Activated CD8-positive, alpha-beta T cell treated with anti-CD3 and anti-CD28 coated beads, Interleukin-2, amount 10 ng/mL, durations not matched to agents 7 days and 5 days (primary cell): ENCODE measurements at regions of chr3 and their contacts with region 1.

Region 1: DNA sequence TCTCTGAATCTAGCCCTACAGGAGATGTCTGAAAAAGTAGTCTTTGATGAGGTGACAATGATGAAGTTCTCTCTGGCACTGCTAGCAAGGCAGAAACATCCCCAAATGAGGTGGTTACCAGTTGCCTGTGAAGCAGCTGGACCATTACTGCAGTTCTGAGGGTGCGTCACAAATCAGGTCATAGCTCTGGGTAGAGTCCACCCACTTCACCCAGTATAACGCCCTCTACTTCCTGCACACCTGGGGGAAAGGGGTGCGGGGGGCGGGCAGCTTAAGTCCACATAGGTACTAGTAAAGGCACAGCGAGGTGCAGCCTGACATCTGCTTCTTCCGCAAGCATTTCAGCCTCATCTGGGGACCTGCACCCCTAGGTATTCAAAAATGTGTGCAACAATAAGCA is 13.4 kb upstream of the SATB1 start:
- DNase-seq: peak; percentile 83
- ATAC-seq: peak; percentile 79
- H3K4me3 Mint-ChIP-seq: peak overlapping the region; percentile 69
- H3K27ac Mint-ChIP-seq: peak overlapping the region; percentile 80
- H3K4me1 Mint-ChIP-seq: peaks cover 44% of the 10 kb centered on the region
- H3K27me3 Mint-ChIP-seq: no peaks in the 10 kb centered on the region

Region 2: DNA sequence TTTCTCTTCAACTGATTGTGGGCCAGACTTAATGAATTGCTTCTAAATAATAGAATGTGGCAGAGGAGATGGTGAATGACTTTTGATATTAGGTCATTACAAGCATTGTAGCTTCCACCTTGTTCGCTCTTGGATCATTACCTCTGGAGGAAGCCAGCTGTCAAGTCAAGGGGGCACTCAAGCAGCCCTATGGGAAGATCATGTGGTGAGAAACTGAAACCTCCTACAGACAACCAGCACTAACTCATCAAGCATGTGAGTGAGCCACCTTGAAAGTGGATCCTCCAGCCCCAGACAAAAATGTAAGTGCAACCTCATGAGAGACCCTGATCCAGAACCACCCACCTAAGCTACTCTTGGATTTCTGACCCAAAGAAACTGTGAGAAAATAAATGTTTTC is 586.4 kb before region 1 on chr3:
- CTCF ChIA-PET with region 1: no interaction called
- POLR2A ChIA-PET with region 1: no interaction called
- DNase-seq: no peak
- ATAC-seq: no peak
- H3K4me3 Mint-ChIP-seq: no peak overlapping the region
- H3K27ac Mint-ChIP-seq: no peak overlapping the region
- H3K4me1 Mint-ChIP-seq: no peaks in the 10 kb centered on the region
- H3K27me3 Mint-ChIP-seq: peaks cover 27% of the 10 kb centered on the region

Region 3: DNA sequence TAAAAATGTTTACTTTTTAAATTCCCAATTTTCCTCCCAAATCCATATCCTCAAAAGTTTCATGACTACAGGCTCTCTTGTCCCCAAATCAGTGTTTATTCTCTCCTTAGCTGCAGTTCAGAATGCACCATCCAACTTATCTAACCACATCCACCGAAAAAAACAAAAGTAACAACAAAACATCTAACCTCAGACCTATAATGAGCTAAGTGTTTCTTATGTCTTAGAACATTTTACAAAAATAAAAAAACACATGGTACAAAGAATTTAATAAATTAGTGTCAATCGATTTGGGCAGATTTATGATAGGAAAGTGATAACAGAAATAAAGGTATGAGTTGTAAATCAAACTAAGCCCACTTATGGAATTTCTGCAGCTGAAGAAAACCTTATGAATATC is 27.0 kb before region 1 on chr3:
- CTCF ChIA-PET with region 1: interaction called, 42 read pairs
- POLR2A ChIA-PET with region 1: interaction called, 265 read pairs
- DNase-seq: no peak
- ATAC-seq: peak; percentile 44
- H3K4me3 Mint-ChIP-seq: peak overlapping the region; percentile 63
- H3K27ac Mint-ChIP-seq: peak overlapping the region; percentile 71
- H3K4me1 Mint-ChIP-seq: peaks cover 87% of the 10 kb centered on the region
- H3K27me3 Mint-ChIP-seq: no peaks in the 10 kb centered on the region

Region 4: GRCh38 chr3:18424729-18425640 is 13.6 kb before region 1 on chr3 and contains the start of gene SATB1:
- CTCF ChIA-PET with region 1: interaction called, 42 read pairs
- POLR2A ChIA-PET with region 1: interaction called, 265 read pairs
- DNase-seq: peak; percentile 79
- ATAC-seq: peak; percentile 23
- H3K4me3 Mint-ChIP-seq: peak within 1 kb of the TSS; percentile 87
- H3K27ac Mint-ChIP-seq: peak within 1 kb of the TSS; percentile 88
- H3K4me1 Mint-ChIP-seq: peaks cover 60% of the 10 kb centered on the region
- H3K27me3 Mint-ChIP-seq: no peaks in the 10 kb centered on the region
- total RNA-seq, gene SATB1: 268 to 273 TPM